ENCODE measurements at regions of chr21 and their contacts with region 1.

Region 1: GRCh38 chr21:42107881-42108553 is 36.9 kb downstream of the UMODL1 start:
- DNase-seq: peak; percentile 57 to 84 (median 77)
- H3K4me3 ChIP-seq: peak overlapping the region in 5 of 7 experiments; percentile 0 to 66 (median 52)
- H3K27ac ChIP-seq: peak overlapping the region in 1 of 2 experiments; percentile 47
- H3K4me1 ChIP-seq: peaks cover 1 to 53% (median 50%) of the 10 kb centered on the region in 4 experiments
- H3K27me3 ChIP-seq: no peaks in the 10 kb centered on the region

Region 2: GRCh38 chr21:41914940-41915339 is 193.1 kb before region 1 on chr21:
- CTCF ChIA-PET with region 1: no interaction called
- POLR2A ChIA-PET with region 1: no interaction called
- DNase-seq: no peak
- H3K4me3 ChIP-seq: no peak overlapping the region
- H3K27ac ChIP-seq: no peak overlapping the region
- H3K4me1 ChIP-seq: peaks cover 0 to 1% (median 0%) of the 10 kb centered on the region in 4 experiments
- H3K27me3 ChIP-seq: no peaks in the 10 kb centered on the region

Region 3: DNA sequence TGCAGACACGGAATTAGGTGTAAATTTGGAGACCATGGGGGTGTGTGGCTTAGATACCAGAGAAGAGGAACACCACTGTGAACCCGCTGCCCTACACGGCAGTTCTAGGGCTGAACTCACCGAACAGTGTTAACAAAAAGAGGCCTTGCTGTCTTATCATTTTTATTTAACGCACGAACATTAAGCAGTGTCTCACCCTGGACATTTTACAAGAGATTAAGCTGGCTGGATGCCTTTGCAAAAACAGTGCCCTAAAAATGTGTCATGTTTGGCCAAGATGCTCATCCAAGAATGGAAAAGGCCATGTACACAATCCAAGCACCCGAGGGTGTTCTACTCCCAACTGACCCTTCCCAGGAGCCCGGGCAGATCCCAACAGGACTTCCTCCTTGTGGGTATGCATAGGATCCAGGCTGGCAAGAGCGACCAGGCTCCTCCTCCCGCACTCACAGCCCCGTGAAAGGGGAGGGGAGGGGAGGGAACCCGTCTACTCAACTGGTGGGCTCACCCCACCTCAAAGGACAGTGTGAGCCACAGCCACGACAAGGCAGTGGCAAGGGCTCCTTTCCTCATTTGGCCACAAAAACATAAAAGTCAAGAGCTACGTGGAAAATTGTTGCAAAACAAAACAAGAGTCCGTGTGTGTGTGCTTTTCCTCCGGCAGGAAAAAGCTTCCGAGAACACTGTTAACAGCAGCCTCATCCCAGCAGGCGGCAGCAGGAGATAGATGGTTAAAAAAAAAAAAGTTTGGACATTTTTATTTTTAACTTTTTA is 174.5 kb before region 1 on chr21:
- CTCF ChIA-PET with region 1: interaction called, 21 read pairs
- POLR2A ChIA-PET with region 1: no interaction called
- DNase-seq: peak in 2 of 3 donors; percentile 75 to 84
- H3K4me3 ChIP-seq: peak overlapping the region in 5 of 7 experiments; percentile 2 to 54 (median 46)
- H3K27ac ChIP-seq: peak overlapping the region; percentile 29 to 72
- H3K4me1 ChIP-seq: peaks cover 19 to 59% (median 52%) of the 10 kb centered on the region in 4 experiments
- H3K27me3 ChIP-seq: no peaks in the 10 kb centered on the region

Region 4: GRCh38 chr21:42062236-42063022 is 45.6 kb before region 1 on chr21:
- CTCF ChIA-PET with region 1: interaction called, 15 read pairs
- POLR2A ChIA-PET with region 1: interaction called, 3 read pairs
- DNase-seq: peak; percentile 93 to 99 (median 97)
- H3K4me3 ChIP-seq: peak overlapping the region in 6 of 7 experiments; percentile 34 to 76 (median 51)
- H3K27ac ChIP-seq: peak overlapping the region; percentile 73 to 87
- H3K4me1 ChIP-seq: peaks cover 12 to 63% (median 62%) of the 10 kb centered on the region in 4 experiments
- H3K27me3 ChIP-seq: no peaks in the 10 kb centered on the region

Region 5: DNA sequence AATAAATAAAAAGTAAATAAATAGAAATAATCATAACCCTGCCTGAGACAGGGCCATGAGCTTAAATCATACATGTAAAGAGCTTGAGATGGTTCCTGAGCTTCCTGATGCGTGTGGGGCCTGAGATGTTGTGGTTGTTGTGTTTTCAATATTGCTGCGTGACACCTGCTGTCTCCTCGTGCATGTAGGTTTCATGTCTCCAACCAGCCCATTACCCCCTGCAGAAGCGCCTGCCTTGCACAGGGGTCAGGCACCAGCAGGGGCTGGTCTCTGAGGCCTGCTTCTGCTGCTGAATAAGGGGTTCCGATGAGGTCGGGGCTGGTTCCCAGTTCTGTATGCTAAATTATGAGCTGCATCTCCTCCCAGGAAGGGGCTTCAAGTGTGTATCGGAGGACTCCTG is 21.0 kb before region 1 on chr21:
- CTCF ChIA-PET with region 1: interaction called, 21 read pairs
- POLR2A ChIA-PET with region 1: interaction called, 6 read pairs
- DNase-seq: no peak
- H3K4me3 ChIP-seq: no peak overlapping the region
- H3K27ac ChIP-seq: no peak overlapping the region
- H3K4me1 ChIP-seq: peaks cover 0 to 5% (median 2%) of the 10 kb centered on the region in 4 experiments
- H3K27me3 ChIP-seq: no peaks in the 10 kb centered on the region

Region 6: DNA sequence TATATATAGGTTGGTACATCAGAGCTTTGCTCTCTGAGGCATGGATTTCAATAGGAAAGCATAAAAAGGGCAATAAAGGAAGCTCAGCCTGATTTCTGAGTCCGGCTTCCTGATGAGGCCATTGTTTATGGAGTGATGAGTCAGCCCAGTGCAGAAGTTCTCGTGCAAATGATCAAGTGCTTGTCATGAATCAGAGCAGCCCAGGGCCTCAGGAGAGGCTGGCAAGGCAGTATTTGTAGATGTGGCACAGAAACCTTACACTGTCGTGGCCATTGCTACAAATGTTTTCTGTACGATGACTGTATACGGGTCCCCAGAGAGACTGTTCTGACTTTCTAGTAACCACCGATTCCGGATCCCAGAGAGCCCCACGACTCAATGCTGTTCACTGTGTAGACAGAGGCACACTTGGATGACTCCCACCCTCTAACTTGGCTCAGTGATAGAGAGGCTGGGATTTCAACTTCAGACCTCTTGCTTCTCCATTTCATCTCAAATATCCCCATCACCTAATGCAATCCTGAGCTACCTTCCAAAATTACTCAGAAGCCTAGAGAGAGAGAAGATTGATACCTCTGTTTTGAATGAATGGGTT is 10.1 kb before region 1 on chr21:
- CTCF ChIA-PET with region 1: interaction called, 28 read pairs
- POLR2A ChIA-PET with region 1: no interaction called
- DNase-seq: peak; percentile 81 to 94 (median 92)
- H3K4me3 ChIP-seq: no peak overlapping the region
- H3K27ac ChIP-seq: peak overlapping the region in 1 of 2 experiments; percentile 25
- H3K4me1 ChIP-seq: peaks cover 0 to 23% (median 12%) of the 10 kb centered on the region in 4 experiments
- H3K27me3 ChIP-seq: no peaks in the 10 kb centered on the region

Region 7: GRCh38 chr21:42299324-42300044 is 191.5 kb after region 1 on chr21:
- CTCF ChIA-PET with region 1: no interaction called
- POLR2A ChIA-PET with region 1: no interaction called
- DNase-seq: no peak
- H3K4me3 ChIP-seq: no peak overlapping the region
- H3K27ac ChIP-seq: no peak overlapping the region
- H3K4me1 ChIP-seq: peaks cover 0 to 33% (median 17%) of the 10 kb centered on the region in 4 experiments
- H3K27me3 ChIP-seq: no peaks in the 10 kb centered on the region

Measured in common myeloid progenitor, CD34-positive (primary cell).